ENCODE measurements at regions of chr2 and their contacts with region 1.

Region 1: DNA sequence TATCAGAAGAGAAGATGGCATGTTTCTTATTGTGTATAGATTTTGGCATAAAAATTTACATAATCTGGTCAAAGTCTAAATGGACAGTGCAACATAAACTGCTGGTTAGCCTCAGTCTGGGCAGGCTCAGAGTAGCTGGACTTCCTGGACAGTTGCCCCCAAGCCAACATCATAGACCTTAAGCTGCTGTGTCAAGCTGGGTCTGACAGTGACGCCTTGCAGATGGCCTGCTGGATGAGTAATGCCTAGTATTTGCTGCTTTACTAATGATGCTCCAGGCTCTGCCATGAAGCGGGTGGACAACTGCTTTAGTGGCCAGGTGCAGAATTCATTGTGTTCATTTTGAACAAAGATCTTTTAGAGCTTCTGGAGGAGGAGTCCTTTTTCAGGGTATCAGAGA is 603.7 kb upstream of the ZEB2 start:
- DNase-seq: peak; percentile 74

Region 2: DNA sequence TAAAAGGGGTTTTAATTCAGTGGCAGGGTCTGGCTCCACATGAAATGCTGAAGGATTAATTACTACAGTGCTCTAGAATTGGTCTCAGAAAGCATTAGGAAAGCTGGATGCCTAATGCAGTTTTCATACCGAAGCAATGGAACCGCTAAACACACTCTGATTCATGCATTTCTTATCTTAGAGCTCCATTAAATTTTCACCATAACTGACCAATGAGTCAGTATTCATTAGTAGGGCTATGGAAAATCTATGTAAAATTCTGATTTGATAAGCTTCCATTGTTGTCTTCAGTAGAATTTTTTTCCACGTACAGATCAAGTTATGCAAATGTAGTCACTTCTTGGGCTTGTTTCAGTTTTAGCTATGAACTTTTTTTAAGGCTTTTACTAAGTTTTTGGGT is 1634.5 kb before region 1 on chr2:
- intact Hi-C with region 1: loop called (anchors 10 kb)
- DNase-seq: no peak

Region 3: DNA sequence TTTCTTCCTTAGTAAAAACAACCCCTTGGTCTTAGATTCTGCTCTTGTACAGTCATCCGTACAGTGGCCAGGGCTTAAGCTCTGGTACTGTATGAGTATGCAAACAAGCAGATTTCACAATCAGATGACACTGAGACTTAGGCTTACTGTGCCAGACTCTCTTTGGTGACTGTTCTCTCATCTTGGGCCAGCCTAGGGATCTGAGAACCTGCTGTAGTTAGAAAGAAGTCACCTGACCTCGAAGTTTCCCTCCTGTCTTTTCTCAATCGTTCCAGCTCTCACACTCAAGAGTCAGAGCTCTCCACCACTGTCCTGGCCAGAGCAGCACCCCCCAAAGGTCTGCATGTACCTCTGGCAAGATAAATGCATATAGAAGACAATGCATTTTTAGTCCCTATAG is 666.9 kb before region 1 on chr2:
- intact Hi-C with region 1: no loop called
- DNase-seq: no peak

Region 4: GRCh38 chr2:145287736-145288135 is 164.1 kb after region 1 on chr2:
- intact Hi-C with region 1: no loop called
- DNase-seq: no peak

Region 5: GRCh38 chr2:145919477-145919876 is 795.9 kb after region 1 on chr2:
- intact Hi-C with region 1: loop called (anchors 10 kb)
- DNase-seq: no peak

Measured in cardiac septum (tissue), 1 donor.